Activated naive CD8-positive, alpha-beta T cell treated with anti-CD3 and anti-CD28 coated beads, Interleukin-2, amount 10 ng/mL, durations not matched to agents 7 days and 5 days (primary cell): ENCODE measurements at regions of chr12 and their contacts with region 1.

Region 1: DNA sequence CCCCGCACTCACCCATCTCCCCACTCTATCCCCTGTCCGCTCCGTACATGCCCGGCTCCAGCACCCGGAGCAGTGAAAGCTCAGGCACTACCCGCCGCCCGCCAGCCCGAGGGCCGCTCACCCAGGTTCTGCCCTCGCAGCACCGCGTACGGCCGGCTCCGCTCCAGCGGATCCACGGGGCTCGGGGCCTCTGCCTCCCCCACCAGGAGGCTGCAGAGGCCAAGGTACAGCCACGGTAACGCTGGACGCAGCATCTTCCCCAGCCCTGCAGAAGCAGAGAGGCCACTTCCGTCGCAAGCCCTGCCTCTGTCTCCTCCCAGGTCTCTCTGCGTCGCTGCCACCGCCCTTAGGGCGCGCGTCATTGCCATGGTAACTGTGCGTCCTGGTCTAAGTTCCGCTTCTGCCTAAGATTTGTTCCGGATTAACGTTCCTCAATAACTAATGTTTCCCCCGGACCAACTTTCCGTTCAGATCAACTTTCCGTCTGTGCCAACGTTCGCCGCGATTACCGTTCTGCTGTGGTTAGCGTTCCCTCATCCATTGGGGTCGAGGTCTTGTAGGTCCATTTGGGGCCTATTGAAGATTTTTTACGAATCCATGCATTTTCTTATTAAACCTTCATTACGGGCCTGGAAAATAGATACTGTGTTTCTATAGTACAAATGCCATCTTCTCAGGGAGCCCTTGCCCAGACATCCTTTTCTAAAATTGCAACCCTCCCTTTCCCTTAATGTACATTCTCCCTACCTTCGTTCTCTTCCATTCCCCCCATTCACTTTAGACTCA is at the start of gene C12orf76:
- DNase-seq: peak; percentile 86
- ATAC-seq: peak; percentile 99
- H3K4me3 Mint-ChIP-seq: peak within 1 kb of the TSS; percentile 96
- H3K27ac Mint-ChIP-seq: peak within 1 kb of the TSS; percentile 91
- H3K4me1 Mint-ChIP-seq: peaks cover 21% of the 10 kb centered on the region
- H3K27me3 Mint-ChIP-seq: no peaks in the 10 kb centered on the region
- total RNA-seq, gene C12orf76: 22.1 to 23.2 TPM

Region 2: DNA sequence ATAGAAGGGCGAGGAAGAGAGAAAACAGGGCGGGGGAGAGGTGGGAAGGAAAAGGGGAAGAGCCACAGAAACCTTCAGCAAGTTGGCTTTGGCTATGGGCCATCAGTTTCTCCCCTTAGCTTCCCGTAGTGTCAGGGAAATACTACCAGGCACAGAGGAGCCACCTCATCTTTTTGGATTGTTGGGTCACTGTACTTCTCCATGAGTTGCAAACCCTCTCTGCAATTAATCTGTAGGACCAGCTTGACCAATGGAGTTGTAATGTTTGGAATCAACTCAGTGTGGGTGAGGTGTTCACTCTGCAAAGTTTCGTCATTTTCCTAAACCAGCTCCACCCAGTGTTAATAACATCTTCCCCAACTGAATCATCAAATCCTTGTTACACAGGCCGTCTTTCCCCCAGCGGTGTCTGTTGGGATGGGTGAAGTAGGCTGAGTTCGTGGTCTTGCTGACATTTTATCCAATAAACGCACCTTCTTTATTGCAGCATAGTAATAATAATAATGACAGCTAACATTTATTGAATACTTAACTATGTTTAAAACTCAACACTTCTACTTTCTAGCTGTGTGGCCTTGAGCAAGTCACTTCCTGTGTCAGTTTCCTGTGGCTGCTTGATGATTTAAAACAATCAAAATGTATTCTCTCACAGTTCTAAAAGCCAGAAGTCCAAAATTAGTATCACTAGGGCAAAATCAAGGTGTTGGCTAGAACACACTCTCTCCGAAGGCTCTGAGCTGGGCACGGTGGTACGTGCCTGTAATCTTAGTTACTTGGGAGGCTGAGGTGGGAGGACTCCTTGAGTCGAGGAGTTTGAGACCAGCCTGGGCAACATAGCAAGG is 160.0 kb before region 1 on chr12:
- POLR2A ChIA-PET with region 1: no interaction called
- DNase-seq: no peak
- ATAC-seq: peak; percentile 60
- H3K4me3 Mint-ChIP-seq: peak overlapping the region; percentile 37
- H3K27ac Mint-ChIP-seq: peak overlapping the region; percentile 95
- H3K4me1 Mint-ChIP-seq: peaks cover 36% of the 10 kb centered on the region
- H3K27me3 Mint-ChIP-seq: peaks cover 12% of the 10 kb centered on the region

Region 3: GRCh38 chr12:110079477-110080400 is 31.3 kb after region 1 on chr12:
- POLR2A ChIA-PET with region 1: interaction called, 10 read pairs
- DNase-seq: peak; percentile 74
- ATAC-seq: peak; percentile 90
- H3K4me3 Mint-ChIP-seq: peak overlapping the region; percentile 86
- H3K27ac Mint-ChIP-seq: peak overlapping the region; percentile 96
- H3K4me1 Mint-ChIP-seq: peaks cover 17% of the 10 kb centered on the region
- H3K27me3 Mint-ChIP-seq: peaks cover 2% of the 10 kb centered on the region